Right ventricle myocardium superior (tissue), 1 donor: ENCODE measurements at regions of chr22 and their contacts with region 1.

Region 1: GRCh38 chr22:50341977-50342650 is 1.0 kb upstream of the PPP6R2 start:
- DNase-seq: peak; percentile 94
- ATAC-seq: peak; percentile 92

Region 2: GRCh38 chr22:50136581-50137015 is 205.5 kb before region 1 on chr22:
- intact Hi-C with region 1: no loop called
- DNase-seq: no peak
- ATAC-seq: peak; percentile 10

Region 3: GRCh38 chr22:50244420-50245213 is 97.5 kb before region 1 on chr22 and contains the start of gene TUBGCP6:
- intact Hi-C with region 1: loop called (anchors 2 kb)
- DNase-seq: peak; percentile 98
- ATAC-seq: peak; percentile 96
- total RNA-seq, gene TUBGCP6: 14.1 TPM

Region 4: GRCh38 chr22:50276143-50276542 is 66.0 kb before region 1 on chr22:
- intact Hi-C with region 1: loop called (anchors 5 kb)
- DNase-seq: peak; percentile 78
- ATAC-seq: peak; percentile 90

Region 5: GRCh38 chr22:50444663-50445062 is 102.5 kb after region 1 on chr22:
- intact Hi-C with region 1: no loop called
- DNase-seq: no peak
- ATAC-seq: no peak